ENCODE measurements at regions of chr5 and their contacts with region 1.

Region 1: GRCh38 chr5:171783051-171783450 is 2.6 kb upstream of the SMIM23 start:
- DNase-seq: no peak
- CTCF ChIP-seq: no peak

Region 2: GRCh38 chr5:171794470-171794960 is 11.5 kb after region 1 on chr5:
- CTCF ChIA-PET with region 1: interaction called, 10 read pairs
- POLR2A ChIA-PET with region 1: no interaction called
- DNase-seq: no peak
- CTCF ChIP-seq: no peak